ENCODE measurements at regions of chr5 and their contacts with region 1.

Region 1: DNA sequence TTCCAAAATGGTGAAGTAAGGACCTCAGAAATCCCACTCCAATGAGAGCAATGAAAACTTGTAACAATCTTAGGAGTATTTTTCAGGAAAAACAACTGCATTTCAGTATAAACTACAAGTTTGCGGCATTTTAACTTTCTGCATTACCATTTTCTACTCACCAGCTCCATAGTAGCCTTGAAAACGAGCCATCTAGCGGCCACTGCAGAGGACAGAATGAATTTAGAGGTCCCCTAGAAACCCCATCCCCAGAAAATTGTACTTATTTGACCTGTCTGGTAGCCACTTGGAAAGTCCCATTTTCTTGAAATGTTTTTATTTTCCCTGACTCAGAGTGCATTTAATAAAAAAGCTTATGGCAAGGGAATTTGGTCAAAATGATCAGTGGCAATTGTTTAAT is 205.4 kb upstream of the ITGA1 start:
- DNase-seq: no peak
- ATAC-seq: no peak
- H3K4me3 ChIP-seq: no peak overlapping the region
- H3K4me3 Mint-ChIP-seq: no peak overlapping the region
- H3K27ac ChIP-seq: no peak overlapping the region
- H3K27ac Mint-ChIP-seq: no peak overlapping the region
- H3K4me1 ChIP-seq: no peaks in the 10 kb centered on the region
- H3K4me1 Mint-ChIP-seq: no peaks in the 10 kb centered on the region
- H3K27me3 ChIP-seq: peaks cover 0 to 2% of the 10 kb centered on the region in 2 experiments
- H3K27me3 Mint-ChIP-seq: peaks cover 16 to 34% of the 10 kb centered on the region in 2 donors

Region 2: GRCh38 chr5:52544738-52545137 is 37.6 kb before region 1 on chr5:
- CTCF ChIA-PET with region 1: interaction called in 1 of 2 experiments, 10 read pairs
- POLR2A ChIA-PET with region 1: no interaction called
- DNase-seq: no peak
- ATAC-seq: no peak
- H3K4me3 ChIP-seq: no peak overlapping the region
- H3K4me3 Mint-ChIP-seq: no peak overlapping the region
- H3K27ac ChIP-seq: no peak overlapping the region
- H3K27ac Mint-ChIP-seq: no peak overlapping the region
- H3K4me1 ChIP-seq: no peaks in the 10 kb centered on the region
- H3K4me1 Mint-ChIP-seq: no peaks in the 10 kb centered on the region
- H3K27me3 ChIP-seq: peaks cover 0 to 4% of the 10 kb centered on the region in 2 experiments
- H3K27me3 Mint-ChIP-seq: peaks cover 3 to 5% of the 10 kb centered on the region in 2 donors

Measured in T-cell (primary cell).